ENCODE measurements at regions of chr1 and their contacts with region 1.

Region 1: DNA sequence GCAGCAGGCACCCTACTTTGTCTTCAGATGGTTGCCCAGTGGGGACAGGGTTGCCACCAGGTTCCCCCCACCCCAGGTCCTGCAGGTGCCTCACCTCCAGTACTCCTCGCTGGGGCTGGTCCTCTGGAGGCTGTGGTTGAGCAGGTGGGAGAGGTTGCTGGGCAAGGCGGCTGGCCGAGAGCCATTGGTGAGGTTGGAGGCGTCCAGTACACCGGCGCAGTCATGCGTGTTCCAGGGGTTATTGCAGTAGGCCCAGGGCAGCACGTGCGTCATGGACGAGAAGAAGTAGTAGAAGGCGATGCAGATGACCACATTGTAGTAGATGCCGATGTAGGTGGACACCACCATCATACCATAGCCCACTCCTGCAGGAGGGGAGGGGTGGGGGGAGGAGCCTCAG is 16.9 kb downstream of the CCDC24 start:
- DNase-seq: no peak
- ATAC-seq: no peak
- H3K4me3 ChIP-seq: no peak overlapping the region
- H3K27ac ChIP-seq: no peak overlapping the region
- H3K4me1 ChIP-seq: no peaks in the 10 kb centered on the region
- H3K27me3 ChIP-seq: no peaks in the 10 kb centered on the region
- CTCF ChIP-seq: no peak
- POLR2A ChIP-seq: no peak

Region 2: GRCh38 chr1:44044071-44044801 is 36.0 kb after region 1 on chr1:
- in situ Hi-C with region 1: loop called in 3 of 4 experiments (anchors 5 kb)
- intact Hi-C with region 1: loop called (anchors 1 kb)
- DNase-seq: no peak
- ATAC-seq: no peak
- H3K4me3 ChIP-seq: no peak overlapping the region
- H3K27ac ChIP-seq: no peak overlapping the region
- H3K4me1 ChIP-seq: no peaks in the 10 kb centered on the region
- H3K27me3 ChIP-seq: no peaks in the 10 kb centered on the region
- CTCF ChIP-seq: no peak
- POLR2A ChIP-seq: no peak

Region 3: DNA sequence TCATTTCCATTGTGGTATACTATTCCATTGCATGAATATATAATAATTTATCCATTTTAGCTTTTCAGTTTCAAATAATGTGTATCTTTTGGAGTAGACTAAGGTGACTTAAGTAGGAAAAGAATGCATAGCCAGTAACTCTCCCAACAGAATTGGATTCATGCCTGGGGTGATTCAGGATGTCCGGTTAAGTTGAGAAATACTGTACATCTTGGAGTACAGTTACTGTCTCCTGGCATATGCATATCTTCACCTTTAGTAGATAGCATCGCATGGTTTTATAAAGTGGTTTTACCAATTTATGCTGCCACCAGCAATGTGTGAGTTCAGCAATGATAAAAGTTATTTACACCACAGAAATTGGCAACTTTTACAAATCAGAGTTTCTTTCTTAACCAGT is 41.6 kb after region 1 on chr1:
- in situ Hi-C with region 1: loop called in 2 of 4 experiments (anchors 5 kb)
- intact Hi-C with region 1: loop called (anchors 1 kb)
- DNase-seq: no peak
- ATAC-seq: no peak
- H3K4me3 ChIP-seq: no peak overlapping the region
- H3K27ac ChIP-seq: no peak overlapping the region
- H3K4me1 ChIP-seq: no peaks in the 10 kb centered on the region
- H3K27me3 ChIP-seq: no peaks in the 10 kb centered on the region
- CTCF ChIP-seq: no peak
- POLR2A ChIP-seq: no peak

Measured in gastrocnemius medialis (tissue), 4 donors.